ENCODE measurements at regions of chr4 and their contacts with region 1.

Region 1: DNA sequence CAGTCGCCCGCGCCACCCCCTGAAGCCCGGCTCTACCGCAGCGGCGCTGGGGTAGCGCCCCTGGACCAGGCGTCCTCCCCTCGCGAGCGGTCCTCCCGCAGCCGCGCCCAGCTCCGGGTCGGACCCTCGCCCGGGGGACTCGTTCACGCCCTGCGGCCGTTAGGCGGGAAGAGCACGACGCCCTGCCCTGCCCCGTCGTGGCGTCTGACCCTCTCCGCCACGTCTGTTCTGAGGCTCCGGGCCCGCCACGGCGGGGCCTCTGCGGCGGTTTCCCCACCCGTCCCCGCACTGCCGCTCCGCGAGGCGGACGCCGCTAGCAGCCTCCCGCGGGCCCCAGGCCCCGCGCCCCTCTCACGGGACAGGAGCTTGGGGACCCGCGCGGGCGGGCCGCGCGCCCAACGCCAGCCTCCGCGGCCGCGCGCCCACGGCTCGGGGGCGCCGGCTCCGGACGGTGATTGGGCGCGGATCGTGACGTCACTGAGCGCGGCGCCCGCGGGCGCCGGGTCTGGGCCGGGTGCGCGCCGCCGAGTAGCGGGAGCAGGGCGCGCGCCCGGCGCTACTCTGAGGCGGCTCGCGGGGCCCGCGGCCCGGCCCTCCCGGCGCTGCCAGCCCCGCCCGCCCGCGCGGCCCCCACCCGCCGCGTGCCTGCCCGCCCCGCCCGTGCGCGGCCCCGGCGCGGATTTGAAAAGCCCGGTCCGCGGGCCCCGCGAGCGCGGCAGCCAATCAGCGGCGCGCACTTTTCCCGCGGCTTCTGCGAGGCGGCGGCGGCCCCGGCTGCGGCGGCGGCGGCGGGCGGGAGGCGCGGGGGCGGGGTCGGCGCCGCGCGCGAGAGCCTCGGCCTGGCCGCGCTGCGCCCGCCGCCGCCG is at the start of gene NSD2:
- DNase-seq: no peak
- ATAC-seq: peak; percentile 60
- H3K4me3 ChIP-seq: peak within 1 kb of the TSS; percentile 83
- H3K27ac ChIP-seq: peak within 1 kb of the TSS; percentile 97
- H3K4me1 ChIP-seq: peaks cover 23% of the 10 kb centered on the region
- H3K27me3 ChIP-seq: no peaks in the 10 kb centered on the region
- CTCF ChIP-seq: no peak
- EP300 ChIP-seq: 0 out of 4 replicates have a peak, but pooled peaks of 1 of the 2 experiments have one; percentile 8
- POLR2A ChIP-seq: peak; percentile 95
- RAD21 ChIP-seq: no peak
- polyA plus RNA-seq, gene NSD2: 8.6 to 9.3 TPM

Region 2: GRCh38 chr4:1329408-1330371 is 541.1 kb before region 1 on chr4:
- CTCF ChIA-PET with region 1: no interaction called
- POLR2A ChIA-PET with region 1: no interaction called
- RAD21 ChIA-PET with region 1: no interaction called
- SMC1A ChIA-PET with region 1: no interaction called
- in situ Hi-C with region 1: no loop called
- intact Hi-C with region 1: no loop called
- DNase-seq: no peak
- ATAC-seq: no peak
- H3K4me3 ChIP-seq: no peak overlapping the region
- H3K27ac ChIP-seq: no peak overlapping the region
- H3K4me1 ChIP-seq: no peaks in the 10 kb centered on the region
- H3K27me3 ChIP-seq: no peaks in the 10 kb centered on the region
- CTCF ChIP-seq: no peak
- EP300 ChIP-seq: no peak
- POLR2A ChIP-seq: no peak
- RAD21 ChIP-seq: no peak

Region 3: DNA sequence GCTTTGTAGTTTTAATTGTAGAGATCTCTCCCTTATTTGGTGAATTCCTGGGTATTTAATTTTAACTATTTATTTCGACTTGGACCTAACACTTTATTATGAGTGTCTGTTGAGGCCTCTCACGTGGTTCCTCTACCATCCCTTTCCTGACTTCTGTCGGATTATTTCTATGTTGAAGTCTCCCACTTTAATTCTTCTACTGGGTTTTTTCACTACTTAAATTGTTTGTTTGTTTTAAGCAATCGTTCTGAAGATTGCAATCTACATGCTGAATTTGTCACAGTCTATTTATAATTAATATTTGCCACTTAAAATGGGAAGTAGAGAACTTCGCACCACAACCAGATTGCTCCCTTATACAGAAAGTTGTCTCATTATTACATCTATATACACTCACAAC is 443.8 kb before region 1 on chr4:
- CTCF ChIA-PET with region 1: no interaction called
- POLR2A ChIA-PET with region 1: no interaction called
- RAD21 ChIA-PET with region 1: no interaction called
- SMC1A ChIA-PET with region 1: no interaction called
- in situ Hi-C with region 1: no loop called
- intact Hi-C with region 1: no loop called
- DNase-seq: no peak
- ATAC-seq: no peak
- H3K4me3 ChIP-seq: no peak overlapping the region
- H3K27ac ChIP-seq: no peak overlapping the region
- H3K4me1 ChIP-seq: no peaks in the 10 kb centered on the region
- H3K27me3 ChIP-seq: no peaks in the 10 kb centered on the region
- CTCF ChIP-seq: no peak
- EP300 ChIP-seq: no peak
- POLR2A ChIP-seq: no peak
- RAD21 ChIP-seq: no peak

Region 4: DNA sequence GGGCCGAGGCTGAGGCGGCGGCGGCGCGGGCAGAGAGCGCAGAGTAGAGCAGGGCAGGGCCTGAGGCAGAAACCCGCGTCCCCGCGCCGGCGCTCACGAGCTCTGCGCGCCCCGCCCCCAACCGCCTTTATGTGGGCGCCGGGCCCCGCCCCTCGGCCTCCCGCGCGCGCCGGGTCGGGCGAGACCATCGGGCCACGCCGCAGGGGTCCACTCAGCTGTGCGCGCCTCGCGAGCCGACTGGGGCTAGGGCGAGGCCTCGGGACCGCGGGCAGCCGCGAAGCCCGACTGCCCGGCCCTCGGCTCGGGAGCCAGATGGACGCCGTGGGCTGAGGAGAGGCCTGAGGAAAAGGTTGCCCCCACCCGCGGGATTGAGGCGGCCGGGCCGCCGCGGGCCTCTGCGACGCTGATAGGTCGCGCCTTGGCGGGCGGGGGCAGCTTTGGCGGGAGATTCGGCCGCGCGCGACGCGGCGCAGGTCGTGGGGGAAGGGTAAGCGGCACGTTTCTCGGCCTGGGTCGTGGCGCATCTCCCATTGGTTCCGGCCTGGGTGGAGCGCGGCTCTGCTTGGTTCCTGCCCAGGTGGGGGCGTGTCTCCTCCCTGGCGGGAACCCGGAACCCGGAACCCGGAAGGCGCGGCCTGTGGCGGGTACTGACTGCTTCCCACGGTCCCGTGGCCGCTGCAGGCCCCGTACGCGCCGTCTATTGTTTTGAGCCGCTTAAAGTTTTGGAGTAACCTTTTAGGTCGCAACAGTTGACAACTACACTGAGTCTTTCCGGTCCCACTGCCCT is 158.4 kb before region 1 on chr4 and contains the start of gene SLBP:
- CTCF ChIA-PET with region 1: no interaction called
- POLR2A ChIA-PET with region 1: interaction called, 4 read pairs
- RAD21 ChIA-PET with region 1: no interaction called
- SMC1A ChIA-PET with region 1: no interaction called
- in situ Hi-C with region 1: no loop called
- intact Hi-C with region 1: loop called (anchors 5 kb)
- DNase-seq: peak; percentile 90
- ATAC-seq: peak; percentile 85
- H3K4me3 ChIP-seq: peak within 1 kb of the TSS; percentile 100
- H3K27ac ChIP-seq: peak within 1 kb of the TSS; percentile 99
- H3K4me1 ChIP-seq: peaks cover 31% of the 10 kb centered on the region
- H3K27me3 ChIP-seq: no peaks in the 10 kb centered on the region
- CTCF ChIP-seq: no peak
- EP300 ChIP-seq: no peak
- POLR2A ChIP-seq: no peak
- RAD21 ChIP-seq: no peak
- polyA plus RNA-seq, gene SLBP: 94.4 to 101 TPM

Region 5: GRCh38 chr4:1856042-1856788 is 14.6 kb before region 1 on chr4 and contains the start of gene LETM1:
- CTCF ChIA-PET with region 1: interaction called, 6 read pairs
- POLR2A ChIA-PET with region 1: interaction called, 6 read pairs
- RAD21 ChIA-PET with region 1: interaction called, 4 read pairs
- SMC1A ChIA-PET with region 1: interaction called, 6 read pairs
- in situ Hi-C with region 1: no loop called
- intact Hi-C with region 1: loop called (anchors 1 kb)
- DNase-seq: peak; percentile 83
- ATAC-seq: peak; percentile 96
- H3K4me3 ChIP-seq: peak within 1 kb of the TSS; percentile 95
- H3K27ac ChIP-seq: peak within 1 kb of the TSS; percentile 67
- H3K4me1 ChIP-seq: peaks cover 13% of the 10 kb centered on the region
- H3K27me3 ChIP-seq: no peaks in the 10 kb centered on the region
- CTCF ChIP-seq: no peak; a peak in 1 of 6 replicates
- EP300 ChIP-seq: no peak
- POLR2A ChIP-seq: peak; percentile 88
- RAD21 ChIP-seq: no peak
- polyA plus RNA-seq, gene LETM1: 2.6 to 4.0 TPM

Region 6: DNA sequence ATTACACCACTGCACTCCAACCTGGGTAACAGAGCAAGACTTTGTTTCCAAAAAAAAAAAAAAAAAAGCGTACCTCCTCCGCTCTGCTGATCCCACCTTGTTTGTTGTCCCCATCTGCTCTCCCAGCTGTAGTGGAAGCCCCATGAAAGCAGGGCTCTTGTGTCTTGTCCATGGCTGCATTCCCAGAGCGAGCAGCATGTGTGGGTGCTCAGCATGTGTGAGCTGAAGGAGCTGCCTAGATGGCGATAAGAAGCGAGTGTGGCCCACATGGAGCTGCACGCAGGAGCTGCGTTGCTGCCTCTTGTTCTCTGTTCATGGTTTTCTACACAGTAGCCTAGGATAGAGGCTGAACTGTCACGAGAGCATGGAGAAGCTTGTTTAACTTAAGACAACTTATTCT is 12.8 kb after region 1 on chr4:
- CTCF ChIA-PET with region 1: interaction called, 8 read pairs
- POLR2A ChIA-PET with region 1: interaction called, 10 read pairs
- RAD21 ChIA-PET with region 1: no interaction called
- SMC1A ChIA-PET with region 1: interaction called, 5 read pairs
- in situ Hi-C with region 1: no loop called
- intact Hi-C with region 1: no loop called
- DNase-seq: no peak
- ATAC-seq: no peak
- H3K4me3 ChIP-seq: no peak overlapping the region
- H3K27ac ChIP-seq: no peak overlapping the region
- H3K4me1 ChIP-seq: peaks cover 8% of the 10 kb centered on the region
- H3K27me3 ChIP-seq: no peaks in the 10 kb centered on the region
- CTCF ChIP-seq: no peak
- EP300 ChIP-seq: no peak
- POLR2A ChIP-seq: 0 out of 2 replicates have a peak, but pooled peaks have one; percentile 23
- RAD21 ChIP-seq: no peak

Region 7: GRCh38 chr4:1981251-1982058 is 110.6 kb after region 1 on chr4:
- CTCF ChIA-PET with region 1: no interaction called
- POLR2A ChIA-PET with region 1: no interaction called
- RAD21 ChIA-PET with region 1: no interaction called
- SMC1A ChIA-PET with region 1: no interaction called
- in situ Hi-C with region 1: no loop called
- intact Hi-C with region 1: no loop called
- DNase-seq: no peak
- ATAC-seq: peak; percentile 19; the same call in 1 of the 3 replicates
- H3K4me3 ChIP-seq: no peak overlapping the region
- H3K27ac ChIP-seq: no peak overlapping the region
- H3K4me1 ChIP-seq: no peaks in the 10 kb centered on the region
- H3K27me3 ChIP-seq: no peaks in the 10 kb centered on the region
- CTCF ChIP-seq: no peak
- EP300 ChIP-seq: no peak
- POLR2A ChIP-seq: 0 out of 2 replicates have a peak, but pooled peaks have one; percentile 17
- RAD21 ChIP-seq: no peak

Region 8: DNA sequence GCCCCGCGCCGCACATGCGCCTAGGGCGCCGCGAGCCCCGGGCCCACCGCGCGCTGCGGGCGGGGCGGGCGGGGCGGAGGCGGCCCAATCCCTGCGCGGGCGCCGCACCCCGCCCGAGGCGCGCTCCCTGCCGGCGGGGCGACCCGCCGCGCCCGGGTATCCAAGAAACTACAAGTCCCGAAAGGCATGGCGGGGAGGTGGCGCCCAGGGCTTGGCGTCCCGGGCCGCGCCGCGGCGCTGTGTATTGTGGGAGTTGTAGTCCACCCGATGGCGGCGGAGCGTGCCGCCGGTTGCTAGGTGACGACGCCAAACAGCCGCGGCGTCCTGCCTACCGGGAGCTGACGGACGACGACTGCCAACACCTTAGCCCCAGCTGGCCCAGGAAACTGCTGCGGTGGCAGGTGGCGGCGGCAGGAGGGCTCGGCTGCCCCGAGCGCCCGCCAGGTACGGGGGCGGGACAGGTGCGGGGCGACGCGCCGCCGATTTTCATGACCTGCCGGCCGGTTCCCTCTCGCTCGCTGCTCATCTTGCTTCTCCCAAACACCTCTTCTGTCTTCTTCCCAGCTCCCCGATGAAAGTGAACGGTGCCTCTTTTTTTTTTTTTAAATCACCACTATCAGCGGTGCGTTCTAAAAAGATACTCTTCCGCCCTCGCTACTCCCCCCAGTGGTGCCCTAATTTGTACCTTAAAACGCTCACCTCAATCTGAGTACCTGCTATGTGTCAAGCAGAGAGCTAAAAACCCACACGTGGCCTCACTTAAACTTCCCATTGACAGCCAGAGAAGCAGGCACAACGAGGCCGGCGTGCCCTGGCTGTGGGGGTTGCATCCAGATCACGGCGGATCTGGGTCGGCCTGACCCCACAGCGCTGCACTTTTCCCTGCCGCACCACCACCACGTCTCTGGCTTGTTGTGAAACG is 548.1 kb after region 1 on chr4 and contains the start of gene CFAP99:
- CTCF ChIA-PET with region 1: no interaction called
- POLR2A ChIA-PET with region 1: no interaction called
- RAD21 ChIA-PET with region 1: no interaction called
- SMC1A ChIA-PET with region 1: no interaction called
- in situ Hi-C with region 1: no loop called
- intact Hi-C with region 1: loop called (anchors 10 kb)
- DNase-seq: peak; percentile 72
- ATAC-seq: peak; percentile 93
- H3K4me3 ChIP-seq: peak within 1 kb of the TSS; percentile 67
- H3K27ac ChIP-seq: no peak within 1 kb of the TSS
- H3K4me1 ChIP-seq: peaks cover 23% of the 10 kb centered on the region
- H3K27me3 ChIP-seq: peaks cover 12 to 22% of the 10 kb centered on the region in 2 experiments
- CTCF ChIP-seq: peak in 1 of 3 experiments; percentile 31; a peak in 2 of 6 replicates
- EP300 ChIP-seq: no peak
- POLR2A ChIP-seq: no peak
- RAD21 ChIP-seq: no peak
- polyA plus RNA-seq, gene CFAP99: not detected

Measured in GM12878 (cell line).